Activated CD4-positive, alpha-beta T cell treated with anti-CD3 and anti-CD28 coated beads for 36 hours (primary cell): ENCODE measurements at regions of chr1 and their contacts with region 1.

Region 1: GRCh38 chr1:35369922-35370671 is 101.6 kb downstream of the ZMYM4 start:
- DNase-seq: no peak
- ATAC-seq: no peak
- H3K4me3 Mint-ChIP-seq: no peak overlapping the region
- H3K27ac Mint-ChIP-seq: no peak overlapping the region
- H3K4me1 Mint-ChIP-seq: no peaks in the 10 kb centered on the region
- H3K27me3 Mint-ChIP-seq: no peaks in the 10 kb centered on the region

Region 2: DNA sequence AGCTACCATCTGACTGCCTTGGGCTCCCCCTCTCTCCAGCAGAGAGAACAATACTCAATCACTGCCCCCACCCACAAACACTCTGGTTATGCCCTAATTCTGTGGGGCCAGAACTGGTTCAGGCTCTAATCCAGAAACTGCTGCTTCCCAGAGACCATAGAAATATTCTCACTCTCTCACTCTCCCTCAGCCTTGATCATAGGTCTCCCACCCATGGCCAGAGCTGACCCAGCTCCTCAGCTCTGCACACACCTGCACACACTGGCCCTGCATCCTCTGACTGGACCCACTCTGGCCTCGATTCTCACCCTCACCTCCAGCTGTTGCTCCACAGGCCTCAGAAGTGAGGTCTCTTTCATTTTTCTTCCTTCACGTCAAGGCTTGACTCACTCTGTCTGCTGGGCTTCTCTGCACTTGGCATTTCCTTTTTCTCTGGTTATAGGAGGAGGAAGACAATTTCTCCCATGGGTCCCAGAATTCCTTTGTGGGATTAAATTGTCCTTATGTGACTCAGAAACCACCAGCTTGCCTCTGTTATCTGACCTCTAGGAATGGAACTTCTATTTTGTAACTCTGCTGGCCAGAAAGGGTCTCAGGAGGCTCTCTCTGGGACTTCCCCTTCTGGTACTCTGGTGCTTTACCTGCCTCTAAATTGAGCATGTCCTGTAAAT is 322.8 kb before region 1 on chr1:
- CTCF ChIA-PET with region 1: no interaction called
- POLR2A ChIA-PET with region 1: no interaction called
- intact Hi-C with region 1: no loop called
- DNase-seq: no peak
- ATAC-seq: no peak
- H3K4me3 Mint-ChIP-seq: no peak overlapping the region
- H3K27ac Mint-ChIP-seq: no peak overlapping the region
- H3K4me1 Mint-ChIP-seq: peaks cover 4% of the 10 kb centered on the region
- H3K27me3 Mint-ChIP-seq: no peaks in the 10 kb centered on the region

Region 3: DNA sequence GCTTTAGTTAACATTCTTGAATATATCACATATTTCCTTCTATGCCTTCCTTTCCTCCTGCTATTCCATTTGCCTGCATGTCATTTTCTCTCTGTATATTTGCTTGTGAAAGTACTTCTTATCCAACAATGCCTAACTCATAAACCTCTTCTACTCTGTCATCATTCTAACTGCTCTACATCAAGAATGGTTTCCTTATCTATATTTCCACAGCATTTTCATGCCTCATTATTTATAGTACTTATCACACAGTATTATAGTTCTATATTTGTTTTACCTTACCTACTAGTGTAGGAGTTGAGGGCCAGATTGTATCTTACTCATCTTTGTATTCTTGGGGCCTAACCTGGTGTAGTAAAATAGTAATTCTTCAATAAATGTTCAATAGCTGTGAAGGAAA is 10.1 kb before region 1 on chr1:
- CTCF ChIA-PET with region 1: interaction called, 3 read pairs
- POLR2A ChIA-PET with region 1: no interaction called
- intact Hi-C with region 1: loop called in 1 of 2 experiments (anchors 1 kb)
- DNase-seq: no peak
- ATAC-seq: no peak
- H3K4me3 Mint-ChIP-seq: no peak overlapping the region
- H3K27ac Mint-ChIP-seq: no peak overlapping the region
- H3K4me1 Mint-ChIP-seq: peaks cover 11% of the 10 kb centered on the region
- H3K27me3 Mint-ChIP-seq: no peaks in the 10 kb centered on the region